Mammary epithelial cell (primary cell): ENCODE measurements at regions of chr6 and their contacts with region 1.

Region 1: GRCh38 chr6:143677891-143678791 is at the start of gene PHACTR2:
- DNase-seq: peak; percentile 58
- H3K4me3 ChIP-seq: peak within 1 kb of the TSS; percentile 62 to 82 (median 78)
- H3K27ac ChIP-seq: peak within 1 kb of the TSS; percentile 72
- H3K4me1 ChIP-seq: peaks cover 34% of the 10 kb centered on the region
- H3K27me3 ChIP-seq: no peaks in the 10 kb centered on the region
- CTCF ChIP-seq: no peak
- total RNA-seq, gene PHACTR2: 24.3 to 32.1 TPM

Region 2: DNA sequence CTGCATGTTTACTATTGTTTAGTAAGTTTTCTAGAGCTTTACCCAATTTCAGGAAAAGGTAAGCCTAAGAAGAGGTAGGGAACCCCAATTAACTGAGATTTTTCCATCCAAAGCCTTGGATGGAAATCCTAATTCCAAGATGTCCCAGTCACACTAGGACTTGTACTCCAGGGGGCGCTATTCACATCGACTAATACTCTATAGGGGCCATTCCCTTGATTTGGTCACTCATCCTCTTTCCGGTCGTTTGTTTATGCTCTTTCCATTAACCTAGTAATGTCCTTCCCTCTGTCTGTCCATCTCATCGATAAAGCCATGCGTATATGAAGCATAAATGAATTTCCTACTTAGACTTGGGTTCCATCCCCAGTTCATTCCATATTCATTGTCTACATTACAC is 85.8 kb before region 1 on chr6:
- CTCF ChIA-PET with region 1: no interaction called
- dilution Hi-C with region 1: no loop called
- in situ Hi-C with region 1: no loop called
- intact Hi-C with region 1: loop called (anchors 5 kb)
- DNase-seq: no peak
- H3K4me3 ChIP-seq: no peak overlapping the region
- H3K27ac ChIP-seq: no peak overlapping the region
- H3K4me1 ChIP-seq: no peaks in the 10 kb centered on the region
- H3K27me3 ChIP-seq: no peaks in the 10 kb centered on the region
- CTCF ChIP-seq: peak; percentile 41

Region 3: GRCh38 chr6:143634493-143634892 is 43.6 kb before region 1 on chr6:
- CTCF ChIA-PET with region 1: no interaction called
- dilution Hi-C with region 1: no loop called
- in situ Hi-C with region 1: no loop called
- intact Hi-C with region 1: loop called (anchors 5 kb)
- DNase-seq: peak; percentile 43
- H3K4me3 ChIP-seq: no peak overlapping the region
- H3K27ac ChIP-seq: no peak overlapping the region
- H3K4me1 ChIP-seq: no peaks in the 10 kb centered on the region
- H3K27me3 ChIP-seq: no peaks in the 10 kb centered on the region
- CTCF ChIP-seq: no peak

Region 4: GRCh38 chr6:144008120-144008811 is 330.1 kb after region 1 on chr6 and contains the start of gene PLAGL1:
- CTCF ChIA-PET with region 1: no interaction called
- dilution Hi-C with region 1: no loop called
- in situ Hi-C with region 1: no loop called
- intact Hi-C with region 1: loop called (anchors 5 kb)
- DNase-seq: peak; percentile 57
- H3K4me3 ChIP-seq: peak within 1 kb of the TSS; percentile 55 to 66 (median 62)
- H3K27ac ChIP-seq: peak within 1 kb of the TSS; percentile 77
- H3K4me1 ChIP-seq: peaks cover 4% of the 10 kb centered on the region
- H3K27me3 ChIP-seq: no peaks in the 10 kb centered on the region
- CTCF ChIP-seq: no peak
- total RNA-seq, gene PLAGL1: 10.8 to 30.7 TPM